ENCODE measurements at regions of chr10 and their contacts with region 1.

Region 1: GRCh38 chr10:79347226-79347893 is at the start of gene PPIF:
- DNase-seq: peak; percentile 95
- H3K4me3 Mint-ChIP-seq: peak within 1 kb of the TSS; percentile 86
- H3K27ac Mint-ChIP-seq: peak within 1 kb of the TSS; percentile 92
- H3K4me1 Mint-ChIP-seq: peaks cover 26% of the 10 kb centered on the region
- H3K27me3 Mint-ChIP-seq: no peaks in the 10 kb centered on the region
- total RNA-seq, gene PPIF: 87.2 to 94.0 TPM

Region 2: GRCh38 chr10:79242620-79243152 is 104.7 kb before region 1 on chr10:
- CTCF ChIA-PET with region 1: interaction called, 3 read pairs
- POLR2A ChIA-PET with region 1: interaction called, 8 read pairs
- intact Hi-C with region 1: loop called (anchors 2 kb)
- DNase-seq: peak; percentile 79
- H3K4me3 Mint-ChIP-seq: peak overlapping the region; percentile 76
- H3K27ac Mint-ChIP-seq: peak overlapping the region; percentile 91
- H3K4me1 Mint-ChIP-seq: peaks cover 55% of the 10 kb centered on the region
- H3K27me3 Mint-ChIP-seq: no peaks in the 10 kb centered on the region

Region 3: DNA sequence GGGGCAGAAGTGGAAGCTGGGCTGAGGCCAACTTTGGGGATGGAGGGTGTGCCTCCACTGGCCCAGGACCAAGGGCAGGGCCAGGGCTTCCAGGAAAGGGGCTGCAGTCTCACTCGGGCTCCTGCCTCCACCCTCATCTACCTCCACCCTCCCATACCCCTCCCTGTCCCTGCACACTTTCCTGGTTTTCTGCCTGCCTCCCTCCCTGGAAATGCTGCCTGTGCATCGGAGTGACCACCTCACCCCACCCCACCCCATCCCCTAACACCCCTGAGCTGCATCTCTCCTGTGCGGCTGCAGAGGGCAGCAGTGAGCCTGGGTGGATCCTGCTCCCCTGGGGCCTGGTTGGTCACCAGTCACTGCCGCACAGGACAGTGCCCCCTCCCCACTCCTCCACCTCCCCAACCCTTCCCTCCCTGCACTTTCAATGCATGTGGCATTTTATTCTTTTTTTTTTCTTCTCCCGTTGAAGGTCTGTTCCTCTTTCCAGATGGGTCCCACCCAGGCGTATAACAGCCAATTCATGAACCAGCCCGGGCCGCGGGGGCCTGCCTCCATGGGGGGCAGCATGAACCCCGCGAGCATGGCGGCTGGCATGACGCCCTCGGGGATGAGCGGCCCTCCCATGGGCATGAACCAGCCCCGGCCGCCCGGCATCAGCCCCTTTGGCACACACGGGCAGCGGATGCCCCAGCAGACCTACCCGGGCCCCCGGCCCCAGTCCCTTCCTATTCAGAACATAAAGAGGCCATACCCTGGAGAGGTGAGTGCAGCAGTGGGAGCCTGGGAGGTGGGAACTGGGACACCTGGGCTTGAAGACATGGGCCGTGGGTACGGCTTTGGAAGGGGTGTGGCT is 54.2 kb before region 1 on chr10:
- CTCF ChIA-PET with region 1: interaction called, 5 read pairs
- POLR2A ChIA-PET with region 1: interaction called, 4 read pairs
- intact Hi-C with region 1: loop called (anchors 2 kb)
- DNase-seq: peak; percentile 53
- H3K4me3 Mint-ChIP-seq: no peak overlapping the region
- H3K27ac Mint-ChIP-seq: no peak overlapping the region
- H3K4me1 Mint-ChIP-seq: peaks cover 19% of the 10 kb centered on the region
- H3K27me3 Mint-ChIP-seq: no peaks in the 10 kb centered on the region

Region 4: DNA sequence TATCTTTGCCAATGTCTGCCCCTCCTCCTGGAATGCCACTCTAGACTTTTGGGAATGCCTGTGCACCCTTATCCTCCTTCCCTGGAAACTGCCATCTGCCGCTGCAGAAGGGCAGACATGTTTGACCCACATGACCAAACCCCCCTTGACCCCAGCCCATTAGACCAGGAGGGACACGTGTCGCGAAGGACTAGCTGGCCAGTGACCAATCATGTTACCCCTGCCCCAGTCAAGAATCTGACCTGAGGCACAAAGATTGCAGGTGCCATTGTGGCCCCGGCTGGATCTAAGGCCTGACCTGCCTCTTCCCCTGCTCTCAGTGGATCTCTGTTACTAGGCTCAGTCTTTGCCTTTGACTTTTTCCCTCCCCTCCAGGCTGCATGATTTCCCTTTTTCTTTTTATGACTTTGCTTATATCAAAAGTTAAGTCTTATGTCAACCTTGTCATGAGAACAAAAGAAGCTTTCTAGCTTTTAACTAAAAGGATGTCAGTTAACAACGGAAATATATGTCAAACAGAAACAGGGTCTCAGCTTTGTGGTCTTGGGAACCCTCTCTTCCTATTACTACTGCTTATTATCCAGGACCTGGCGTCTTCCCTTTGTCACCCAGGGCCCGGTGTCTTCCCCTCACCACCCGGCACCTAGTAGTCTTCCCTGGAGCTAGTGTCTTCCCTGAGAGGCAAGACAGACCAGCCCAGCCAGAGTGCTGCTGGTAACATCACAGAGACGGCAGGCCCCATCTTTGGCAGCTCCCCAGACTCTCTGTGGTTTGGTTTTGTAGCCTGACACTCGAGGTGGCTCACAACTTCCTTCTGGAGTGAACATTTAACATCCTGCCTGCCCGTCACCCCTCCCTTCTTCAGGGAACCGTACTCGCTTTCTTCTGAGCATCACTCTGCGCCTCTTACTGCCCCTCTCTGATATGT is 24.5 kb before region 1 on chr10:
- CTCF ChIA-PET with region 1: interaction called, 30 read pairs
- POLR2A ChIA-PET with region 1: interaction called, 23 read pairs
- intact Hi-C with region 1: loop called (anchors 1 kb)
- DNase-seq: peak; percentile 91
- H3K4me3 Mint-ChIP-seq: peak overlapping the region; percentile 39
- H3K27ac Mint-ChIP-seq: peak overlapping the region; percentile 92
- H3K4me1 Mint-ChIP-seq: peaks cover 69% of the 10 kb centered on the region
- H3K27me3 Mint-ChIP-seq: no peaks in the 10 kb centered on the region

Region 5: GRCh38 chr10:79374312-79375191 is 27.2 kb after region 1 on chr10:
- CTCF ChIA-PET with region 1: interaction called, 13 read pairs
- POLR2A ChIA-PET with region 1: no interaction called
- intact Hi-C with region 1: no loop called
- DNase-seq: peak; percentile 84
- H3K4me3 Mint-ChIP-seq: no peak overlapping the region
- H3K27ac Mint-ChIP-seq: no peak overlapping the region
- H3K4me1 Mint-ChIP-seq: peaks cover 2% of the 10 kb centered on the region
- H3K27me3 Mint-ChIP-seq: no peaks in the 10 kb centered on the region

Region 6: DNA sequence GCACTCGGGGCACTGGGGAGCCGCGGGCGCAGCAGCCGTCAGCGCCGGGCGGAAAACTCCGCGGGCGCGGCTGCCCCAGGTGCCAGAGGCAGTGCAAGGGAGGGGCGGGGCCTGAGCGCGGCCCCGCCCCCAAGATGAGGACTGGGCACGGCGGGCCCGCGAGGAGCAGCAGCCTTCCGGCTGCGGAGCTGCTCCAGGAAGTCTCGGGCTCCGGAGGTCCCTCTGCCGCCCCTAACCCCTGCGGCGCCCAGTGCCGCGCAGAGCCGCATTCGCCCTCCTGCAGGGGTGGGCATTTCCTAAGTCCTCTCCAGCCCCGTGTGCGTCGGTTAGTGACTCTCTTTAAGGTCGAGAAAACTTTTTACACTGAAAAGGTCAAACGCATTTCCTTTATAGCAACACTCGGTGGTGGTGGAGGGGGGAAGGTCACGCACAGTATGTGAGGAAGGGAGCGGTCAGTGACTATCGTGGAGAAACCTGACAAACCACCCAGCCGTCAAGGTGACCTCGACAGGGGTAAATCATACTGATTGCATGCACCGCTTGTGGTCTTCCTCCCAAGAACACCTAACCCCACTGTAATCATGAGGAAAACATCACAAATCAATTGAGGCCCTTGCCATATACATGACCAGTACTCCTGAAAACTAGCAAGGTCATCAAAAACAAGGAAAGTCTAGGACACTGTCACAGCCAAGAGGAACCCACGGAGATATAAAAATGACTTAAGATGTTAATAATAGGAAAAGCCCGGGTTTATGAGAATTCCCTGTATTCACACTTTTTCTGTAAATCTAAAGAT is 858.3 kb after region 1 on chr10 and contains the start of gene ANXA11:
- CTCF ChIA-PET with region 1: no interaction called
- POLR2A ChIA-PET with region 1: no interaction called
- intact Hi-C with region 1: loop called (anchors 10 kb)
- DNase-seq: peak; percentile 89
- H3K4me3 Mint-ChIP-seq: peak within 1 kb of the TSS; percentile 91
- H3K27ac Mint-ChIP-seq: peak within 1 kb of the TSS; percentile 91
- H3K4me1 Mint-ChIP-seq: peaks cover 42% of the 10 kb centered on the region
- H3K27me3 Mint-ChIP-seq: no peaks in the 10 kb centered on the region
- total RNA-seq, gene ANXA11: 237 to 242 TPM